WTC11 (cell line): ENCODE measurements at regions of chr16 and their contacts with region 1.

Region 1: DNA sequence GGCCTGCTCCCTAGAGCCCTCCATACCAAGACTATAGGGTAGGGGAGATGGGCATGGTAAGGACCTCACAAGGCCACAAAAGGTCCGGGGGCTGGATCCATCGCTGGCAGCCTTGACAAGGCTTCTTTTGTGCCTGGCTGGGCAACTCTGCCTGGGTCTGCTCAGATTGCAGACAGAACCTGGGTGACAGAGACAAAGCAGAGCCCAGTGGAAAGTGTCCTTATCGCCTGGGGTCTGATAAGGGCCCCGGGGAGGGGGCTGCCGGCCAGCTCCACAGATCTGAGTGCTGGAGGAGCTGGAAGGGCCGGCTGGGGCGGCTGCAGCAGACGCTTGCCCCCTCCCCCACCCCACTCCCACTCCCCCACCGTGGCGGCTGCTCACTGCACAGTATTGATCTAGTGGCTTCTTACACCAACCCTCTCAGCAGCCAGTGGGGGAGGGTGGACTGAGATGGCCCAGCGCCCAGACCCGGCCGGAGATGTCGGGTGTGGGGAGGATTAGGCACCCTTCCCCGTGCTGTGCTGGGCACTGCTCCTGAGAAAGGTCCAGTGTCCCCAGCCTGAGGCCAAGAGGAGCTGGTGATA is 7.2 kb downstream of the MMP15 start:
- DNase-seq: no peak
- ATAC-seq: peak; percentile 2; the same call in 1 of the 2 replicates
- H3K4me3 Mint-ChIP-seq: no peak overlapping the region
- H3K27ac Mint-ChIP-seq: no peak overlapping the region
- H3K4me1 Mint-ChIP-seq: peaks cover 37% of the 10 kb centered on the region
- H3K27me3 Mint-ChIP-seq: no peaks in the 10 kb centered on the region
- CTCF ChIP-seq: no peak

Region 2: GRCh38 chr16:58047557-58048348 is 15.0 kb after region 1 on chr16:
- CTCF ChIA-PET with region 1: interaction called, 36 read pairs
- POLR2A ChIA-PET with region 1: interaction called, 4 read pairs
- DNase-seq: no peak
- ATAC-seq: peak; percentile 64
- H3K4me3 Mint-ChIP-seq: no peak overlapping the region
- H3K27ac Mint-ChIP-seq: no peak overlapping the region
- H3K4me1 Mint-ChIP-seq: peaks cover 20% of the 10 kb centered on the region
- H3K27me3 Mint-ChIP-seq: no peaks in the 10 kb centered on the region
- CTCF ChIP-seq: no peak

Region 3: DNA sequence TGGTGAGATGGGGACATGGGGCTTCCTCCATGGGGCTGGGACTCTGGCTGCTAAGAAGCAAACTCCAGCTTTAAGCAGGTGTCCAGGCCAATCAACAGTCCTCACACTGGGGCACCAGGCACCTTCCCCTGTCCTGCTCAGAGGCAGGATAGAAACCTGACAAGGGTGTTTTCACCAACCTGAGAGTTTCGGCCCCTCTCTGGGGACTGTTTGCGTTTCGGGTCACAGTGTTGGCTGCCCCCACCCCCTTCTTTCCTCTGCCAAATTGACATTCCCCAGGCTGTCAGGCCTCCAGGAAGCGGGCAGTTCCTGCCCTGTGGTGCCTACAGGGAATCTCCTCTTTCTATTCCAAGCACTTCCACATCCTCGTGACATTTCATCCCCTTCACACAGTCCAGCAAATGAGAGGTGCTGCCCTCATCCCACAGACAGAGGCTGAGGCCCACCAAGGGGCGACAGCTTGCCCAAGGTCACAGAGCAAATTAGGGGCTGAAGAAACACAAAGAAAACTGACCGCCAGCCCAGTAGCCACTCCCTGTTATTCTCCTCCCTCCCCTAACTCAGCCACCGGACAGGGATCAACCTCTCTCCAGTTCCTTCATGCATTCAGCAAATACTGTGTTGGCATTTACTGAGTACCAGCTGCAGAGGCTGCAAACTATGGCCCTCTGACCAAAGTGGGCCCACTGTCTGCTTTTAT is 30.7 kb after region 1 on chr16:
- CTCF ChIA-PET with region 1: interaction called, 11 read pairs
- POLR2A ChIA-PET with region 1: no interaction called
- DNase-seq: no peak
- ATAC-seq: no peak; the same call in 1 of the 2 replicates
- H3K4me3 Mint-ChIP-seq: no peak overlapping the region
- H3K27ac Mint-ChIP-seq: no peak overlapping the region
- H3K4me1 Mint-ChIP-seq: peaks cover 13% of the 10 kb centered on the region
- H3K27me3 Mint-ChIP-seq: no peaks in the 10 kb centered on the region
- CTCF ChIP-seq: no peak

Region 4: GRCh38 chr16:58105631-58106030 is 72.8 kb after region 1 on chr16:
- CTCF ChIA-PET with region 1: interaction called, 12 read pairs
- POLR2A ChIA-PET with region 1: no interaction called
- DNase-seq: no peak
- ATAC-seq: no peak
- H3K4me3 Mint-ChIP-seq: no peak overlapping the region
- H3K27ac Mint-ChIP-seq: no peak overlapping the region
- H3K4me1 Mint-ChIP-seq: peaks cover 39% of the 10 kb centered on the region
- H3K27me3 Mint-ChIP-seq: no peaks in the 10 kb centered on the region
- CTCF ChIP-seq: no peak

Region 5: GRCh38 chr16:58236231-58236690 is 203.5 kb after region 1 on chr16:
- CTCF ChIA-PET with region 1: no interaction called
- POLR2A ChIA-PET with region 1: no interaction called
- DNase-seq: peak; percentile 89
- ATAC-seq: peak; percentile 98
- H3K4me3 Mint-ChIP-seq: peak overlapping the region; percentile 90
- H3K27ac Mint-ChIP-seq: no peak overlapping the region
- H3K4me1 Mint-ChIP-seq: peaks cover 15% of the 10 kb centered on the region
- H3K27me3 Mint-ChIP-seq: peaks cover 26% of the 10 kb centered on the region
- CTCF ChIP-seq: no peak